ENCODE measurements at regions of chr2 and their contacts with region 1.

Region 1: GRCh38 chr2:202660796-202661195 is 26.0 kb downstream of the FAM117B start:
- DNase-seq: no peak
- H3K4me3 Mint-ChIP-seq: no peak overlapping the region
- H3K27ac Mint-ChIP-seq: no peak overlapping the region
- H3K4me1 Mint-ChIP-seq: peaks cover 44% of the 10 kb centered on the region
- H3K27me3 Mint-ChIP-seq: no peaks in the 10 kb centered on the region

Region 2: GRCh38 chr2:202127687-202128331 is 533.0 kb before region 1 on chr2:
- intact Hi-C with region 1: no loop called
- DNase-seq: no peak
- H3K4me3 Mint-ChIP-seq: no peak overlapping the region
- H3K27ac Mint-ChIP-seq: no peak overlapping the region
- H3K4me1 Mint-ChIP-seq: no peaks in the 10 kb centered on the region
- H3K27me3 Mint-ChIP-seq: peaks cover 1% of the 10 kb centered on the region

Region 3: DNA sequence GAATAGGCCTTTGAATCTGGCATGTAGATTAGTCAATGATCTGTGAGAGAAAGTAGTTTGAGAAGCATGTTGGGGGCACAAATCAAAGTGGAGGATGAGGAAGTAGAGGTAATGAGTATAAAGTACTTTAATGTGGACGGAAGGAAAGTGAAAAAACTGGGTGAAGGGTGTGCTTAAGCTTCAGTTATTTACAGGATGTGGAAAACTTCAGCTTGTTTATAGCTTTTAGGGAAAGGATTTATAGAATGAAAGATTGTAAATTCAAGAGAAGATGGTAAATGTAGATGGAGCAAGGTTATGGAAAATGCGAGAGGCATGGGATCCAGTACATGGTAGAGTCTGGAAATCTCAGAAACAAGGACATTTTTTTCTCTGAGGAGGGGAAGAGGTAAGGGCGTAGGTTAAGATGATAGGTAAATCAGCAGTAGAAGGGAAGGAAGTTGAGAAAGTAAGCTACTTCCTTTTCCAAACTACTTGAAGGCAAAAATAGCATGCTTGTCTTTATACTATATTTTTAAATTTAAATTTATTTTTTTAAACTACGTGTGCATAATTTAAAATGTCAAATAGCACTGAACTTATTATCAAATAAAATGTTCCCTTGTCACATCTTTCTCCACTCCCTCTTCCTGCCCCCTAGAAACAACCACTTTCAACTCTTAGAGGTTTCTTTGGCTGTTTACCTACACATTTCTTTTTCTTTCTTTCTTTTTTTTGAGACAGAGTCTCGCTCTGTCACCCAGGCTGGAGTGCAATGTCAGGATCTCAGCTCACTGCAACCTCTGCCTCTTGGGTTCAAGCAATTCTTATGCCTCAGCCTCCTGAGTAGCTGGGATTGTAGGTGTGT is 17.6 kb before region 1 on chr2:
- intact Hi-C with region 1: loop called (anchors 1 kb)
- DNase-seq: no peak
- H3K4me3 Mint-ChIP-seq: peak overlapping the region; percentile 51
- H3K27ac Mint-ChIP-seq: peak overlapping the region; percentile 85
- H3K4me1 Mint-ChIP-seq: peaks cover 44% of the 10 kb centered on the region
- H3K27me3 Mint-ChIP-seq: no peaks in the 10 kb centered on the region

Region 4: DNA sequence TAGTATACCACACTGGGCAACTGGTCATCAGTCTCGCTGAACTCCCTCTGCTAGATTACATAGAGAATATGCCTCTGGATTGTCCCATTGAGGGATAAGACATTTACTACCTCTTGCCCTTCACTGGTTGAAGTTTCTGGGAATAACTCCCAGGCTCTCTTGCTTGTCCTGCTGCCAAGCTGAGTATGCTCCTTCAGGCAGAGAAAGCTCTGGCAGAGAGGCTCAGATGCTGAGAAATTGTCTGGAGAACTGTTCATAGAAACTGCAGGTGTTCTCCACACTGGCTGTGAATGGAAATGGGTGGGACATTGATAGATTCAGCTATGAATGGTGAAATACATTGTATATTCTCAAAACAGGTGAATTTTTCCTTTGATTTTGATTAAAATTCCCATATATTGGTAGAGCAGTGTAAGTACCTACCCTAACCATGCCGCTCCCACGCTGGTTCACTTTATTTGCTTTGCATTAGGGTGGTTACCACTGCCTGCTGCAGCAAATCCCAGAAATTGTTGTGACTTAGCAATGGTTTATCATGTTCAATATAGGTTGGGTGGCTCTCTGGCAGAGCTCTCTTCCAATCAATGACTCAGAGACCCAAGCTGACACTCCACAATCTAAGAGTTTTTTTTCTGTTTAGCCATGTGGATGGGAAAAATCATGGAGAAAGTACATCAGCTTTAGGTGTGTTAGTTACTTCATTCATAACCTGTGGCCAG is 10.7 kb after region 1 on chr2:
- intact Hi-C with region 1: loop called (anchors 1 kb)
- DNase-seq: no peak
- H3K4me3 Mint-ChIP-seq: no peak overlapping the region
- H3K27ac Mint-ChIP-seq: no peak overlapping the region
- H3K4me1 Mint-ChIP-seq: peaks cover 37% of the 10 kb centered on the region
- H3K27me3 Mint-ChIP-seq: no peaks in the 10 kb centered on the region

Region 5: DNA sequence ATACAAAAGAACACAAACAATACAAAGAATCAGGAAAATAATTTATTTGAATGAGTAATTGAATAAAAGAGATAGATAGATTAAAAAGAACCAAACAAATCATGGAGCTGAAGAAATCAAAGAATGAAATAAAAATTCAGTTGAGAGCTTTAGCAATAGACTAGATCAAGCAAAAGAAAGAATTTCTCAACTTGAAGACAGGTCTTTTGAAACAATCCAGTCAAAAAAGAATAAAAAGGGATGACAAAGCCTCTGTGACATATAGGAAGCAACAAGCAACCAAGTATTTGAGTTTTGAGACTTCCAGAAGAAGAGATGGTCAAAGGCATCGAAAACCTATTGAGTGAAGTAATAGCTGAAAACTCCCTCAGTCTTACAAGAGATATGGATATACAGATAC is 82.8 kb after region 1 on chr2:
- intact Hi-C with region 1: no loop called
- DNase-seq: no peak
- H3K4me3 Mint-ChIP-seq: no peak overlapping the region
- H3K27ac Mint-ChIP-seq: no peak overlapping the region
- H3K4me1 Mint-ChIP-seq: no peaks in the 10 kb centered on the region
- H3K27me3 Mint-ChIP-seq: no peaks in the 10 kb centered on the region

Region 6: DNA sequence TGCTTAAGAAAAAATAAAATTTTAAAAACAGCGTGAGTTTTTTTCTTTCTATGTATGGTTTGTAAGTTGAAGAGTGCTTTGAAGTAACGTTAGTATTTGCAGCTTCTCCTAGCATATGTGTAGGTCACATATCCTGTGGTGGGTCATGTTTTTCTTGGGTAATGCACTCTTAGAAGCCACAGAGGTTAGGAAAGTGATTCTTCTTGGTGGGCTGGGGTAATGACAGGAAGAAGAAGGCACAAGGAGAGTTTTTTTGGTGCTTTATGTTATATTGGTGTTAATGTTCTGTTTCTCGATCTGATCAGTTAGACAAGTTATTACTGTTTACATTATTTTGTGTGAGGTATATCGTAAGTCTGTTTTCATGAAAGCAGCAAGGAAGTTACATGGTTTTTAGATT is 101.8 kb after region 1 on chr2:
- intact Hi-C with region 1: loop called (anchors 5 kb)
- DNase-seq: no peak
- H3K4me3 Mint-ChIP-seq: peak overlapping the region; percentile 28
- H3K27ac Mint-ChIP-seq: peak overlapping the region; percentile 75
- H3K4me1 Mint-ChIP-seq: peaks cover 32% of the 10 kb centered on the region
- H3K27me3 Mint-ChIP-seq: no peaks in the 10 kb centered on the region

Region 7: GRCh38 chr2:202932425-202933138 is 271.8 kb after region 1 on chr2:
- intact Hi-C with region 1: no loop called
- DNase-seq: no peak
- H3K4me3 Mint-ChIP-seq: no peak overlapping the region
- H3K27ac Mint-ChIP-seq: no peak overlapping the region
- H3K4me1 Mint-ChIP-seq: peaks cover 1% of the 10 kb centered on the region
- H3K27me3 Mint-ChIP-seq: no peaks in the 10 kb centered on the region

Region 8: DNA sequence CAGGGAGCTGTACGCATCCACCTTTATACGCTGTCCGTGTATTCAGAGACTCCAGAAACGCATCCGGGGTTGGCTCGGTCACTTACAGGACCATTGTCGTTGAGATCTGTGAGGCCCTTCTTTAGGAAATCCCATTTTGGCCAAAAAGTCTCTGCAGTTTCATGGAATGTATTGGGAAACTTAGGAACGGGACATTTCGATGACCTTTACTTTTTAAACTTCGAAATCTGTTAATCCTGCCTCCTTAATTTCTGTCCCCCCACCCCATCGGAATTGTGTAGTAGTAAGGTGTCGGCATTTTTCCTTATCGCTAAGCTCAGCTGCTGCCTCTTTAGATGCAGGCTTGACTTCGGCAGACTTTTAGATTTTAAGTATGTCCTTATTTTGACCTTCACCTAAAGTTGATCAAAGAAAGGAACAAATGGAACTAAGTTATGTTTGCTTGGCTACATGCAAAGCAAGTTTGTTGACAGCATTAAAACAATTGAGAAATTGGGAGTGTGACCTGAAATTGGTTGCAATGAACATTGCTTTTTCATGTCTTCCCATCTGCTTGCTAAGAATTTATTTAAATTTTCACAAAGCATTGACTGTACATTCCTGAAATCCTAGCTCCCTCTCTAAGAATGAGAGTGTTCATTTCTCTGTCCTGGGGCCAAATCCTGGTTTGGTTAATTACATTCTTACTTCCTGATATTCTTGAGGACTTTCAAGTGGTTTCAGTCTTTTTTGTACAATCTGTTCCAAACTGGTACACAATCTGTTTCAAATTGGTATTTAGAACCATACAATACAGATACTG is 875.2 kb after region 1 on chr2:
- intact Hi-C with region 1: no loop called
- DNase-seq: no peak
- H3K4me3 Mint-ChIP-seq: peak overlapping the region; percentile 87
- H3K27ac Mint-ChIP-seq: peak overlapping the region; percentile 78
- H3K4me1 Mint-ChIP-seq: peaks cover 22% of the 10 kb centered on the region
- H3K27me3 Mint-ChIP-seq: peaks cover 57% of the 10 kb centered on the region